MCF 10A (cell line): ENCODE measurements at regions of chr1 and their contacts with region 1.

Region 1: GRCh38 chr1:26378088-26378878 is 5.7 kb upstream of the ZNF683 start:
- DNase-seq: peak; percentile 96
- H3K4me3 Mint-ChIP-seq: peak overlapping the region; percentile 32
- H3K27ac Mint-ChIP-seq: peak overlapping the region; percentile 33
- H3K4me1 Mint-ChIP-seq: peaks cover 15% of the 10 kb centered on the region
- H3K27me3 Mint-ChIP-seq: no peaks in the 10 kb centered on the region
- CTCF ChIP-seq: no peak

Region 2: GRCh38 chr1:26336477-26337205 is 41.6 kb before region 1 on chr1:
- CTCF ChIA-PET with region 1: no interaction called
- POLR2A ChIA-PET with region 1: interaction called, 6 read pairs
- intact Hi-C with region 1: loop called (anchors 1 kb)
- DNase-seq: peak; percentile 88
- H3K4me3 Mint-ChIP-seq: peak overlapping the region; percentile 81
- H3K27ac Mint-ChIP-seq: no peak overlapping the region
- H3K4me1 Mint-ChIP-seq: peaks cover 8% of the 10 kb centered on the region
- H3K27me3 Mint-ChIP-seq: no peaks in the 10 kb centered on the region
- CTCF ChIP-seq: no peak

Region 3: GRCh38 chr1:26358411-26359384 is 19.6 kb before region 1 on chr1:
- CTCF ChIA-PET with region 1: interaction called, 27 read pairs
- POLR2A ChIA-PET with region 1: interaction called, 24 read pairs
- intact Hi-C with region 1: no loop called
- DNase-seq: peak; percentile 61
- H3K4me3 Mint-ChIP-seq: no peak overlapping the region
- H3K27ac Mint-ChIP-seq: no peak overlapping the region
- H3K4me1 Mint-ChIP-seq: peaks cover 33% of the 10 kb centered on the region
- H3K27me3 Mint-ChIP-seq: no peaks in the 10 kb centered on the region
- CTCF ChIP-seq: no peak

Region 4: DNA sequence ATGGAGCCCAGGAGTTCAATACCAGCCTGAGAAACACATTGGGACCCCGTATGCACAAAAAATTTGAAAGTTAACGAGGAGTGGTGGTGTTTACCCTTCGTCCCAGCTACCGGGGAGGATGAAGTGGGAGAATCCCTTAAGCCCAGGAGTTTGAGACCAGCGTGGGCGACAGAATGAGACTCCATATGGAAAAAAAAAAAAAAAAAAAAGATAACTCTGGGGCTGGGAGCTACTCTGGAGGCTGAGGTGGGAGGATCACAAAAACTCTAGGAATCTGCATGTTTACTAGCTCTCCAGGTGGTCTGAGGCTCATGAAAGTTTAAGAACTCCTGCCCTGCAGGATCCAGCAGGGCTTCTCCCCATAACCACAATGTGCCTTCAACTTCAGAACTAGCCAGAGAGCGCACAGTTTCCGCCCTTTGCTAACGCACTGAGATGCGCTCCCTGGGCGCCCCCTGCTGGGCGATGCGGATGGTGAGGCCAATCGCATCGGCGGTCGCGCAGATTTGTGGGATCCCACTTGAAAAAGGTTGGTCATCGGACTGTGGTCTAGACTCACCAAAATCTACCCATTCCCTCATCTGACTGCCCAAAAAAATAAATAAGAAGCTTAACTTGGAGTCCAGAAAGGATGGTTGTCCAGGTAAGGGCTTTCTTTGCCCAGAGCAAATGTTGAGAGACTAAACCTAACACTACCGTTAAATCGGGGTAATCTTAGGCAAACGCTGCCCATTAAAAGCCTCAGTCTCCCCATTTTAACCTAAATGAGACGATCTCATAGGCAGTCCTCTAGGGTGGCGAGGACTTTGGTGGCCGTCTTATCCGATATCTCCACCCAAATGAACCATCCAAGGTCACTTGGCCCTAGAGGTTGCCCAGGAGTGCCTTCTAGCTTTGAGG is 14.5 kb before region 1 on chr1:
- CTCF ChIA-PET with region 1: interaction called, 27 read pairs
- POLR2A ChIA-PET with region 1: interaction called, 24 read pairs
- intact Hi-C with region 1: no loop called
- DNase-seq: peak; percentile 75
- H3K4me3 Mint-ChIP-seq: no peak overlapping the region
- H3K27ac Mint-ChIP-seq: no peak overlapping the region
- H3K4me1 Mint-ChIP-seq: peaks cover 14% of the 10 kb centered on the region
- H3K27me3 Mint-ChIP-seq: no peaks in the 10 kb centered on the region
- CTCF ChIP-seq: peak; percentile 93

Region 5: GRCh38 chr1:26391450-26391849 is 13.2 kb after region 1 on chr1:
- CTCF ChIA-PET with region 1: interaction called, 5 read pairs
- POLR2A ChIA-PET with region 1: interaction called, 12 read pairs
- intact Hi-C with region 1: loop called (anchors 1 kb)
- DNase-seq: peak; percentile 78
- H3K4me3 Mint-ChIP-seq: no peak overlapping the region
- H3K27ac Mint-ChIP-seq: no peak overlapping the region
- H3K4me1 Mint-ChIP-seq: peaks cover 14% of the 10 kb centered on the region
- H3K27me3 Mint-ChIP-seq: no peaks in the 10 kb centered on the region
- CTCF ChIP-seq: peak; percentile 91

Region 6: GRCh38 chr1:26417111-26417759 is 39.0 kb after region 1 on chr1:
- CTCF ChIA-PET with region 1: interaction called, 16 read pairs
- POLR2A ChIA-PET with region 1: interaction called, 9 read pairs
- intact Hi-C with region 1: no loop called
- DNase-seq: peak; percentile 76
- H3K4me3 Mint-ChIP-seq: no peak overlapping the region
- H3K27ac Mint-ChIP-seq: no peak overlapping the region
- H3K4me1 Mint-ChIP-seq: no peaks in the 10 kb centered on the region
- H3K27me3 Mint-ChIP-seq: peaks cover 65% of the 10 kb centered on the region
- CTCF ChIP-seq: peak; percentile 83

Region 7: GRCh38 chr1:26431979-26432695 is 53.9 kb after region 1 on chr1 and contains the start of gene DHDDS:
- CTCF ChIA-PET with region 1: interaction called, 3 read pairs
- POLR2A ChIA-PET with region 1: interaction called, 12 read pairs
- intact Hi-C with region 1: no loop called
- DNase-seq: peak; percentile 97
- H3K4me3 Mint-ChIP-seq: peak within 1 kb of the TSS; percentile 94
- H3K27ac Mint-ChIP-seq: peak within 1 kb of the TSS; percentile 88
- H3K4me1 Mint-ChIP-seq: peaks cover 12% of the 10 kb centered on the region
- H3K27me3 Mint-ChIP-seq: no peaks in the 10 kb centered on the region
- CTCF ChIP-seq: no peak
- total RNA-seq, gene DHDDS: 48.2 and 56.2 TPM in 2 replicates

Region 8: DNA sequence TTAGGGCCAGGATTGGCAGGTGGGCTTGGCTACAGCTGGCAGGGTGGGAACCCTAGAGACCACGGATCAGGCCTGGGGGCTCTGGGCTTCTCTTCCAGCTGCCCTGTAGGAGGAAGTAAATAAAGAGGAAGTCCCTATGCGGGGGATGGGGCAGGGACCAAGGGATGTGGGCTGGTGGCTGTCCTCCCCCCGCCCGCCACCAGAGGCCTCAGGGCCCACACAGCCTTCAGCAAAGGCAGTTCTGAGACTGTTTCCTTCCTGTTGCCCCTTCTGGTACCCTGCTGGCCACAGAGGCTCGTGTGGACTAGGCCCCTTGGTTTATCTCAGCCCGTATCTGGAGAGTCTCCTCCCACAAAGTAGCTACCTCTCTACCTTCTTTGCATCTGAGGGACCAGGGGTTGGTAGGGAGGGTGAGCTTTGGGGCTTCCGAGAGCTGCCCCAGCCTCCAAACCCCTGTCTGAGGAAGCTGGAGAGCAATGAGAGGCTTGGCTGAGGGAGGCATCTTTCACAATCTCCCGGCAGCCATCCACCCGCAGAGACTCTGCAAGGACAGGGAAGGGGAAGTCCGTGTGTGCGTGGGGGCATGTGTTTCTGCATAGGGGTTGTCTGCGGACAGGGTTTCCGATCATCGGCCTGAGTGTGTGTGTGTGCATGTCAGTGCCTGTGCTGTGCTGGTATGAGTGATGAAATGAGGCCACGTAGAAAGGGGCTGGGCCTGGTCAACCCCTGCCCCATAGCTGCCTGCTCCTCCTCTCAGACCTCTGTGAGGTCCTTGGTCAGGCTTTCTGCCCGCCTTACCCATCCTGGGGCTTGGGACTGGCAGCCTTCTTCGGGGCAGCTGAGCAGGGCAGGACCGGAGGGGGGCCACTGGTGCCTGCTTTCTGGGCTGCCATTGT is 163.8 kb after region 1 on chr1:
- CTCF ChIA-PET with region 1: no interaction called
- POLR2A ChIA-PET with region 1: no interaction called
- intact Hi-C with region 1: no loop called
- DNase-seq: peak; percentile 26
- H3K4me3 Mint-ChIP-seq: no peak overlapping the region
- H3K27ac Mint-ChIP-seq: no peak overlapping the region
- H3K4me1 Mint-ChIP-seq: peaks cover 7% of the 10 kb centered on the region
- H3K27me3 Mint-ChIP-seq: no peaks in the 10 kb centered on the region
- CTCF ChIP-seq: no peak

Region 9: DNA sequence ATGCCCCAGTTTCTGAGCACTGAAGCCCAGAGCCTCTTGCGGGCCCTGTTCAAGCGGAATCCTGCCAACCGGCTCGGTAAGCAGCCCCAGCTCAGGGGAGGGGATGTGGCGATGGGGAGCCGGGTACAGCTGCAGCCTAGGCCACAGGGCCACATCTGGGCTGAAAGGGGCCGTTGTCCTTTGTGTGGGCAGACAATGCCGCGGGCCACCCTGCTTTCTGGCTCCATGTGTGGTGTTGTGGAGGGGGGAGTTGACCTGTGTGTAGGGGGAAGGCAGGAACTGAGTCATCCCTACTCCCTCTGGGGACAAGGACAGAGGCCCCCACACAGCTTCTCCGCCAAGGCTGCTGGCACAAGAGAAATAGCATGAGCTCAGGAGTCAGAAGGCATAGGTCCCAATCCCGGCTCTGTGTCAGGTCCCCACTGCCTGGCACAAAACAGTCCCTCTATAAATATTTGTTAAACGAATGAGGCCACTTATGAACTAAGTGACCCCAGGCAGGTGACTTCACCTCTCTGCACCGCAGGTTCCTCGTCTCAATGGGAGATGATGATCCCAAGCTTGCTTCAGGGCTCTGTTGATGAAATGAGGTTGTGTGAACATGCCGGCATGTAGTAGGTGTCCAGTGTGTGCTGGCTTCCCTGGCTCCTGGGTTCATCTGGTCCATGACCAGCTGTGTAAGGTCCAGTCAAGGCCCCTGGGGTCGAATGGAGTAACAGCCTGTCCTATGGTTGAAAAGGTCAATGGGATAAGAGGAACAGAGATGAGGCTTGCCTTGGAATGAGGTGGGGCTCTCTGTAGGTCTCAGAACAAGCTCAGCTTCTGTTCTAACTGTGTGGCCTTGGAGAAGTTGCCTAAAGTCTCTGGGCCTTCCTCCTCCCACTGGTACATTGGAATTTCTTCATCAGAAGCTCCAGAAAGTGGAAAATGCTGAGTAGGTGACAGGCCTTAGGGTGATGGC is 177.5 kb after region 1 on chr1:
- CTCF ChIA-PET with region 1: no interaction called
- POLR2A ChIA-PET with region 1: no interaction called
- intact Hi-C with region 1: no loop called
- DNase-seq: no peak
- H3K4me3 Mint-ChIP-seq: no peak overlapping the region
- H3K27ac Mint-ChIP-seq: no peak overlapping the region
- H3K4me1 Mint-ChIP-seq: no peaks in the 10 kb centered on the region
- H3K27me3 Mint-ChIP-seq: no peaks in the 10 kb centered on the region
- CTCF ChIP-seq: no peak

Region 10: GRCh38 chr1:26627954-26628353 is 249.7 kb after region 1 on chr1:
- CTCF ChIA-PET with region 1: no interaction called
- POLR2A ChIA-PET with region 1: no interaction called
- intact Hi-C with region 1: no loop called
- DNase-seq: no peak
- H3K4me3 Mint-ChIP-seq: no peak overlapping the region
- H3K27ac Mint-ChIP-seq: no peak overlapping the region
- H3K4me1 Mint-ChIP-seq: no peaks in the 10 kb centered on the region
- H3K27me3 Mint-ChIP-seq: no peaks in the 10 kb centered on the region
- CTCF ChIP-seq: no peak